Adrenal gland (tissue), 19 donors: ENCODE measurements at regions of chr4 and their contacts with region 1.

Region 1: GRCh38 chr4:73648478-73648877 is 28.2 kb upstream of the RASSF6 start:
- DNase-seq: no peak
- H3K4me3 ChIP-seq: no peak overlapping the region
- H3K27ac ChIP-seq: no peak overlapping the region
- H3K4me1 ChIP-seq: no peaks in the 10 kb centered on the region
- H3K27me3 ChIP-seq: no peaks in the 10 kb centered on the region
- CTCF ChIP-seq: no peak
- POLR2A ChIP-seq: no peak

Region 2: DNA sequence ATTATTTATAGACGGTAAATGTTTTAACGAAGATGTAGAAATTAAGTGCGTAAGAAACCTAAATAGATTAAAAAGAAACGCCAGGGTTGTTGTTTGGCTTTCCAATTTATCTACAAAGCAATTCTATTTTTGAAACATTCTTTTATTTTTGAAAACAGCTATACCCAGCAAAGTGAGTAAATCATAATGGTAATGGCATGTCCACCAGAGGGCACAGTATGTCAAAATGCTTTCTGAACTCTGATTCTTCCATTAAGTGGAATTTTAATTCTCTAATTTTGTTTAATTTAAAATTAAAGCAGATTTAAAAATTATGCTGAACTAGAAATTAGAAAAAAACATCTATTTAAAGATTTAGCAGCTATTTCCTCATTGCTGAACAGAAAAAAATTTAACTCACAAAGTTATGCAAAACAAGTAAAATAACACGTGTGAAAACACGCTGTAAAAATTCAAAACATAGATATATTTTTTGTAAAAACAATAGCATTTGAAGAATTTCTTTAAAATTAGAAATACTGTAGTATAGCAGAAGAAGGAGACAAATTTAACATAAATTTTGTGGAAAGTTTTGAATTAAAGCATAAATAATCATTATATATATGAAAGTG is 54.7 kb before region 1 on chr4:
- intact Hi-C with region 1: loop called in 1 of 2 experiments (anchors 10 kb)
- DNase-seq: peak in 1 of 7 donors; percentile 11
- H3K4me3 ChIP-seq: no peak overlapping the region
- H3K27ac ChIP-seq: no peak overlapping the region
- H3K4me1 ChIP-seq: no peaks in the 10 kb centered on the region
- H3K27me3 ChIP-seq: no peaks in the 10 kb centered on the region
- CTCF ChIP-seq: peak; percentile 22 to 41 (median 31)
- POLR2A ChIP-seq: no peak